Adrenal gland (tissue), 19 donors: ENCODE measurements at regions of chr2 and their contacts with region 1.

Region 1: DNA sequence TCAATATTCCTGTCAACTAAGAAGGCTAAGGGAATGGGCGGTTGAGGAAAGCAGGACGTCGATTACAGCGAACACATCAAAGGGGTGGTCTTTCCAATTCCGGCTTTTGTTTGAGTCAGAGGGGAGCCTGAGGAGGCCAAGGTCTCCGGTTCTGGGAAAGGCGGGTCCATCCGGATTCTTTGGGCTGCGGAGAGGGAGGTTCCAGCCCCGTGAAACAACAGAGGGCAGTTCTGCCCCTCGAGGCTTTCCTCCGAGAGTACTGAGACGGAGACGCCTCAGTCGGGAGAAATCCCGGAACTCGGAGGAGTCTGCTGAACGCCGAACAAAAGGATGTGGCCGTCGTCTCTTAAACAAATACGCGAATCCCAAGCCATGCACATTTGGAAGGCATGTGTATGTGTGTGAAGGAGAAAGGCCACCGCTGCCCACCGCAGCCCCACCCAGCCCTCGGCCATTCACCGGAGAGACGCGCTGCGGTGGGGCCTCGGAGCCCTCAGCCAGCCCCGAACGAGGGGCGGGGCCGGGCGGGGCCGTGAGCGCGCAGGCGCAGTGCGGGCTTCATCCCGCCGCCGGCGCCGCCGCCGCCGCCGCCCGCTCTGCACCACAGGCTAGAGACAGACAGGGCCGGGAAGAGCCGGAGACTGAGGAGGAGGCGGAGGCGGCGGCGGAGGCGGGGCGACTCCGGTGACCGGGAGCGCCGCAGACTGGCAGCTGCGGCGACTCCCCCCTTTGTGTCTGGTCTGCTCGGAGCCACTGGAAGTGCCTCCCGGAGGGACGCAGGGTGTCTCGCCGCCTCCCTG is at the start of gene BMPR2:
- DNase-seq: peak; percentile 89 to 94 (median 92)
- H3K4me3 ChIP-seq: peak within 1 kb of the TSS; percentile 44 to 94 (median 85)
- H3K27ac ChIP-seq: peak within 1 kb of the TSS; percentile 86 to 99 (median 96)
- H3K4me1 ChIP-seq: peaks cover 14 to 43% of the 10 kb centered on the region in 2 donors
- H3K27me3 ChIP-seq: no peaks in the 10 kb centered on the region
- CTCF ChIP-seq: no peak
- POLR2A ChIP-seq: peak; percentile 83 to 94
- total RNA-seq, gene BMPR2: 29.1 to 123 (median 94.0) TPM

Region 2: GRCh38 chr2:202278944-202279343 is 96.9 kb before region 1 on chr2:
- intact Hi-C with region 1: loop called in 1 of 2 experiments (anchors 5 kb)
- DNase-seq: no peak
- H3K4me3 ChIP-seq: no peak overlapping the region
- H3K27ac ChIP-seq: peak overlapping the region in 4 of 5 donors; percentile 35 to 75 (median 50)
- H3K4me1 ChIP-seq: peaks cover 29 to 35% of the 10 kb centered on the region in 2 donors
- H3K27me3 ChIP-seq: no peaks in the 10 kb centered on the region
- CTCF ChIP-seq: peak; percentile 34 to 66 (median 58)
- POLR2A ChIP-seq: no peak

Region 3: DNA sequence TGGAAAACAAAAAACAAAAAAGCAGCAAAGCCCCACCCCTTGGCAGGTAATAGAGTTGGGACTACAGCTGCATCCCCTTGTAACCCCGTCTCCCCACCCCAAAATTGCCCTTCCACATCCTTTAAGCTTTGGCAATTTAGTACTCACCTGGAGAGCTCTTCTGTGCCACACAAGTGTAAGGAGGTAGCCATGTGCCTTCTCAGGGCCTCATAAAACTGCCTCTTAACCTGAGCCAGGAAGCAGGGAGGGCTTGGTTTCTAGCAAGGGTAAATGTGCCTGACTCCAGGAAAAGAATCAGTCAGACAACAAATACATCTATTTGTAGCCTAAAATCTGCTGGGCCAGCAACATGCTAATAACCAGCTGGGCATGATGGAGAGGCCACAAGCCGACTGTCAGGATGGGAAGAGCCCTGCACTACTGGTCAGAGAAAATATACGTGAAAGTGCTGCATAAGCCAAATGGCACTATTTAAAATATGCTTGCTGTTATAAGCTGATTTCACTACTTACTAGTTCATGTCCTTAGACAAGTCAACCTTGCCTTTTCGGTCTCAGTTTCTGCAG is 63.9 kb before region 1 on chr2:
- intact Hi-C with region 1: loop called in 1 of 2 experiments (anchors 5 kb)
- DNase-seq: no peak
- H3K4me3 ChIP-seq: no peak overlapping the region
- H3K27ac ChIP-seq: no peak overlapping the region
- H3K4me1 ChIP-seq: peaks cover 0 to 3% of the 10 kb centered on the region in 2 donors
- H3K27me3 ChIP-seq: no peaks in the 10 kb centered on the region
- CTCF ChIP-seq: no peak
- POLR2A ChIP-seq: no peak